ENCODE measurements at regions of chr17 and their contacts with region 1.

Region 1: DNA sequence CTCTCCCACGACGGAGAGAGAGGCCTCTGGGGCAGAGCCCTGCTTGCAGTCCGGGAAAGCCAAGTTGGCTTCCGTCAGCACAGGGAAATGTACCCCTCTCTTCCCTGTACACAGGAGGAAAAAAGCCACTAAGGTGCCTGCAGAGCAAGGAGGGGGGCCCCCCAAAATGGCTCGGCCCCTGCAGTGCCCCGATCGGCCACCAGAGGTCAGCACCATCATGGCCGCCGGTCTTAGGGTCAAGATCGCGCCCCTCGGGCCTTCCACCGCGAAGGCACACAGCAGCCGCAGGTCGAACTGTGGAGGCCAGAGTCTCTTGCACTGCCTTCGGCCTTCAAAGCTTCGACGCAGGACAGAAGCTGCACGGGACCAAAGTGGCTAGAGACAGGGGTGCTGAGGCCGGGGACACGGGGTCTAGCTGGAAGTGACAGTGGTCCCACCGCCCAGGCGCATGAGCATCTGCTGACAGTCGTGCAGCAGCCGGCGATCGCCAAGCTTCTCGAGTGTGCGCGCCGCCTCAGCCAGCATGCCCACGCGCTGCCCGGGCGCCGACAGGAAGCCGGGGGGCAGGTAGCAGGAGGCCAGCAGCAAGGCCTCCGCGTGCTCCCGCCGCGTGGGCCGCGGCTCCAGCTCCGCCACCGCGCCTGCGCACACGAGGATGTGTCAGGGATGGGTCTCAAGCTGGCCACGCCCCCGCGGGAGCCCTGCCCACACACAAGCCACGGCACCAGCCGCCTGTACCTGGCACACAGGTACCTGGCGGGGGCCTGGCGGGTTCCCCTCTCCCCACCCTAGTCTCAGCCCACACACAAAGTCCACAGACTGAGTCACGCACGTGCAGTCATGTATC is 24.4 kb downstream of the SREBF1 start:
- DNase-seq: peak; percentile 79
- H3K4me3 ChIP-seq: no peak overlapping the region
- H3K27ac ChIP-seq: peak overlapping the region; percentile 34
- H3K4me1 ChIP-seq: peaks cover 89% of the 10 kb centered on the region
- H3K27me3 ChIP-seq: no peaks in the 10 kb centered on the region
- CTCF ChIP-seq: peak; percentile 100

Region 2: GRCh38 chr17:17859909-17860765 is 47.7 kb after region 1 on chr17:
- intact Hi-C with region 1: loop called (anchors 2 kb)
- DNase-seq: peak; percentile 76
- H3K4me3 ChIP-seq: no peak overlapping the region
- H3K27ac ChIP-seq: peak overlapping the region; percentile 66
- H3K4me1 ChIP-seq: peaks cover 37% of the 10 kb centered on the region
- H3K27me3 ChIP-seq: no peaks in the 10 kb centered on the region
- CTCF ChIP-seq: peak; percentile 99

Region 3: DNA sequence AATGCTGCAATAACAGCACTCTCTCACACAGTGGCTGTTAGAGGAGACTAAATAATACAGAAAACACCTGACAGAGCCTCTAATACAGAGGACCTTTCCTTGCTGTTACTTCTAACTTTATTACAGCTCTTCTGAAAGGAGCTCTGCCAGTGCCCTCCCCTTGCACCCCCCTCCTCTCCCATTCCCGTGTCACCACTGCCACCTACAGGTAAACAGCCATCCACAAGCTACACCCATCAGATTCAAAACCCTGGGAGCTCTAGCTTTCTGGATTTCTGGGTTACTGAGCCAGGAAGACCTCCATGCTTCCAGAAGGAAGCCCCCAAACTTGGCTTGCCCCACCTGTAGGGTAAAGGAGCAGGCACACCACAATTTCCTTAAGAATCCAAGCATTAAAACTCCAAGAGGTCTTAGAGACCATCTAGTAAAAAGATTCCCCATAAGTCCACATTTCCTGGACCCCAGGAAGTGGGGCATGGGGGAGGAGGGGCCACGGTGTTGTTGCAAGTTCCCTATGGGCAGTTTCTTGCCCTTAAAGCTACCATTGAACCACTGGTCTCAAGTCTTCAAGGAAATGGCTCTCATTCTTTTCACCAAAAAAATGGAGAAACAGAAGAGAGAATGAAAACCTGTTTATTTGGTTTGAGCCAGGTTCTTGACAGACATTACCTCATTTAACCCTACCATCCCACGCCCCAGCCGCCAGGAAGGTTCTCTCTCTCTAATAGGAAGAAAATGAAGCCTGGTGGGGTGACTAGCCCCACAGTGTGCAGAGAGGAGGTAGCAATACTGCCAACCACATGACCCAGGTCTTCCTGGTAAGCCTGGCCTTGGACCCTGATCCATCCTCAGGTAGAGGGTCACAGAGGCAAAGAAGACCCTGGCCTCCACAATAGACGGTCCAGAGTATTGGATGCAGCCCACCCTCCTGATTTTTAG is 107.0 kb after region 1 on chr17:
- intact Hi-C with region 1: loop called (anchors 5 kb)
- DNase-seq: peak; percentile 58
- H3K4me3 ChIP-seq: no peak overlapping the region
- H3K27ac ChIP-seq: peak overlapping the region; percentile 86
- H3K4me1 ChIP-seq: peaks cover 67% of the 10 kb centered on the region
- H3K27me3 ChIP-seq: no peaks in the 10 kb centered on the region
- CTCF ChIP-seq: peak; percentile 78

Region 4: DNA sequence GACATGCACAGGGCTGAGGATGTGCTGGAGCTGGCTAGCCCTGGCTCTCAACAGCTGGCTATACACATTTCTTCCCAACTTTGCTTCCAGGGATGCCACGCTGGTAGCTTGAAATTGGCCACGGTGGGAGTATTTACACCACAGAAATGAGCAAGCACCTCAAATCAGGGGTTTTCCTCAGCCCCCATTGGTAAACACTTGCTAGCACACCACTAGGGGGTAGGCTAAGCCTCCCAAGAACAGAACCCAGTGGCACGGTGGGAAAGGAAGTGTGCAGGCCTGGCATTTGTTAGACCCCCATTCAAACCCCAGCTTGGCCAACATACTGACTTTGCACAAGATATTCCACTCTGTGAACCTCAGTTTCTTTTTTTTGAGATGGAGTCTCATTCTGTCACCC is 173.1 kb after region 1 on chr17:
- intact Hi-C with region 1: no loop called
- DNase-seq: no peak
- H3K4me3 ChIP-seq: no peak overlapping the region
- H3K27ac ChIP-seq: no peak overlapping the region
- H3K4me1 ChIP-seq: no peaks in the 10 kb centered on the region
- H3K27me3 ChIP-seq: no peaks in the 10 kb centered on the region
- CTCF ChIP-seq: peak; percentile 19